CD8-positive, alpha-beta T cell (primary cell): ENCODE measurements at regions of chr19 and their contacts with region 1.

Region 1: GRCh38 chr19:12681074-12681951 is at the start of gene DHPS:
- DNase-seq: peak; percentile 81 to 99 (median 90)
- ATAC-seq: peak; percentile 74
- H3K4me3 ChIP-seq: peak within 1 kb of the TSS; percentile 83 to 96
- H3K4me3 Mint-ChIP-seq: peak within 1 kb of the TSS; percentile 96
- H3K27ac ChIP-seq: peak within 1 kb of the TSS; percentile 82 to 97
- H3K27ac Mint-ChIP-seq: peak within 1 kb of the TSS; percentile 92
- H3K4me1 ChIP-seq: peaks cover 19% of the 10 kb centered on the region
- H3K4me1 Mint-ChIP-seq: peaks cover 29% of the 10 kb centered on the region
- H3K27me3 ChIP-seq: no peaks in the 10 kb centered on the region
- H3K27me3 Mint-ChIP-seq: no peaks in the 10 kb centered on the region
- CTCF ChIP-seq: no peak
- total RNA-seq, gene DHPS: 98.7 to 100 TPM

Region 2: GRCh38 chr19:12453491-12453890 is 227.8 kb before region 1 on chr19:
- CTCF ChIA-PET with region 1: no interaction called
- POLR2A ChIA-PET with region 1: no interaction called
- intact Hi-C with region 1: no loop called
- DNase-seq: no peak
- ATAC-seq: no peak
- H3K4me3 ChIP-seq: no peak overlapping the region
- H3K4me3 Mint-ChIP-seq: no peak overlapping the region
- H3K27ac ChIP-seq: no peak overlapping the region
- H3K27ac Mint-ChIP-seq: no peak overlapping the region
- H3K4me1 ChIP-seq: no peaks in the 10 kb centered on the region
- H3K4me1 Mint-ChIP-seq: no peaks in the 10 kb centered on the region
- H3K27me3 ChIP-seq: no peaks in the 10 kb centered on the region
- H3K27me3 Mint-ChIP-seq: no peaks in the 10 kb centered on the region
- CTCF ChIP-seq: no peak

Region 3: DNA sequence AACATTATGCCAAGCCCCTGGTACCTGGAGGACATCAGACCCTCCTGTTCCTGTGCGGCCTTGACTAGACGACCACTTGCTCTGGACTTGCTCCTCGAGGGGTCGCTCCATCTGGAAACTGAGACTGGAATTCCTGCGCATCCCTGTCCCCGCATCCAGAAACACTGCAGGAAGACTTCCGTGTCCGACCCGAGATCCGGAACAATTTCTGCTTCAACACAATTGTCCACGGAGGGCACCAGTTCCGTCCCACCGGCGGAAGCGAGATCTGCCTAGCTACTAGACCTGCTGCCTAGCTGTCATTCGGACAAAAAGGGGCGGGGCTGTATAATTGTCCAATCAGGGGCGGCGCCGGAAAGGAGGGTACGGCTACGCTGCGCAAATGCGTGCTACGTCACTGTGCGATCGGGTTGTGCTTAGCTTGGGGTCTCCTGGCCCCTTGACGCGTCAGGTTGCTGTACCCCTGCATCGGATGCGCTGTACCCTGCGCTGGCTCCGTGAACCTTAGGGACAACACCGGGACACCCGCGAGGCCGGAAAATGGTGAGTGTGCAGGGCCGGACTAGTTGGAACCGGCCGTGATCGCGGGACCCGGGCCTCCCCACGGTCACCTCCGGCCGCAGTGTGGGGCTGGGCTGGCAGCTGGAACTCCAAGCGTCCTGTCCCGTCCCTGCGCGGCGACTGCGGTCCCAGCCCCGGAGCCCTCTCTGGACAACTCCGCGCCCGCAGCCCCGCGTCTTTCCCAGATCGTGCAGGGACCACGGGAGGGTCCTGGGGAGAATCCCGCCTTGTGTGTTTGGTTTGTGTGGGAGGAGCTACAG is 70.6 kb before region 1 on chr19 and contains the starts of genes ZNF490 and ZNF791:
- CTCF ChIA-PET with region 1: interaction called, 3 read pairs
- POLR2A ChIA-PET with region 1: interaction called, 3 read pairs
- intact Hi-C with region 1: loop called in 1 of 2 experiments (anchors 5 kb)
- DNase-seq: peak; percentile 93 to 98 (median 96)
- ATAC-seq: peak; percentile 86
- H3K4me3 ChIP-seq: peak within 1 kb of the TSS; percentile 83 to 85
- H3K4me3 Mint-ChIP-seq: peak within 1 kb of the TSS; percentile 100
- H3K27ac ChIP-seq: peak within 1 kb of the TSS; percentile 87 to 90
- H3K27ac Mint-ChIP-seq: peak within 1 kb of the TSS; percentile 100
- H3K4me1 ChIP-seq: peaks cover 44% of the 10 kb centered on the region
- H3K4me1 Mint-ChIP-seq: peaks cover 47% of the 10 kb centered on the region
- H3K27me3 ChIP-seq: no peaks in the 10 kb centered on the region
- H3K27me3 Mint-ChIP-seq: no peaks in the 10 kb centered on the region
- CTCF ChIP-seq: no peak
- total RNA-seq, gene ZNF490: 5.1 to 7.0 TPM
- total RNA-seq, gene ZNF791: 61.0 to 67.0 TPM

Region 4: GRCh38 chr19:12623361-12624022 is 57.8 kb before region 1 on chr19:
- CTCF ChIA-PET with region 1: no interaction called
- POLR2A ChIA-PET with region 1: no interaction called
- intact Hi-C with region 1: no loop called
- DNase-seq: no peak
- ATAC-seq: no peak
- H3K4me3 ChIP-seq: no peak overlapping the region
- H3K4me3 Mint-ChIP-seq: no peak overlapping the region
- H3K27ac ChIP-seq: no peak overlapping the region
- H3K27ac Mint-ChIP-seq: no peak overlapping the region
- H3K4me1 ChIP-seq: no peaks in the 10 kb centered on the region
- H3K4me1 Mint-ChIP-seq: peaks cover 21% of the 10 kb centered on the region
- H3K27me3 ChIP-seq: no peaks in the 10 kb centered on the region
- H3K27me3 Mint-ChIP-seq: no peaks in the 10 kb centered on the region
- CTCF ChIP-seq: no peak

Region 5: DNA sequence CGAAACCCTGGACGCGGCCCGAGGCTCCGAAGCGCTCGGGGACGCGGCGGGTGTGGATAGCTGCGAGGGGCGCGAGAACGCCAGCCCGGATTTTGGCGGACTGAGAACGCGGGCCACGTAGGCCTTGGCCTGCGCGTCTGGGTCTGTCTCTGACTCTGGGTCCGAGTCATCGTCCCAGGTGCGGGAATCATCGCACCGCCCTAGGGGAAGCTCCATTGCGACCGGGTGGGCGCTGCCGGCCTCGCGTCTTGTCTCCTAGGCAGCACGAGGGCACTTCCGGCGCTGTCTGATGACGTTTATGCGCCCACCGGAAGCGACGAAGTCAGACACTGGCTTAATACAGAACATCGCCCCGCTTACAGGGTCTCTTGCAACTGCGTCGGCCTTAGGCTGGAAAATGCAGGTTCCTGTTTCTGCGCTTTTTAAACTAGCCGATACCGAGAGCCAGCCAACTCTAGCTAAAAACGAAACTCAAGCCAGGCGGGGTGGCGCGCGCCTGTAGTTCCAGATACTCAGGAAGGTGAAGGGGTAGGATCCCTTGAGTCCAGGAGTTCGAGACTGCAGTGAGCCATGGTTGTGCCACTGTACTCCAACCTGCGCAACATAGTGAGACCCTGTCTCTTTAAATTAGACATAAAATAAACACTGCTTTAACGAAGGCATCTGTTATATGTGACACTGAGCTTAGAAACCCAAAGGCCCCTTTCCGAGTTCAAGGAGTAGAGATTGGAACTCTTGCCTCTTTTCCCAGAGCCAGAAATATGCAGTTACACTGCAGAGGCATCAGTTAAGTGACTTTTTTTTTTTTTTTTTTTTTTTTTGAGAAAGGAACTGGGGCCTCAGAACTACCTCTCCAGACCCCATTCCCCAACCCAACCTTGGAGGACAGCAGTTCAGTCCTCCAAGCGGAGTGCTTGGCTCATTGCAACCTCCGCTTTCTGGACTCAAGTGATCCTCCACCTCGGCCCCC is 15.3 kb after region 1 on chr19 and contains the start of gene FBXW9:
- CTCF ChIA-PET with region 1: interaction called, 13 read pairs
- POLR2A ChIA-PET with region 1: interaction called, 22 read pairs
- intact Hi-C with region 1: loop called (anchors 1 kb)
- DNase-seq: peak; percentile 95 to 99 (median 98)
- ATAC-seq: peak; percentile 92
- H3K4me3 ChIP-seq: peak within 1 kb of the TSS; percentile 88 to 89
- H3K4me3 Mint-ChIP-seq: peak within 1 kb of the TSS; percentile 90
- H3K27ac ChIP-seq: peak within 1 kb of the TSS; percentile 87 to 91
- H3K27ac Mint-ChIP-seq: peak within 1 kb of the TSS; percentile 97
- H3K4me1 ChIP-seq: peaks cover 14% of the 10 kb centered on the region
- H3K4me1 Mint-ChIP-seq: peaks cover 11% of the 10 kb centered on the region
- H3K27me3 ChIP-seq: no peaks in the 10 kb centered on the region
- H3K27me3 Mint-ChIP-seq: no peaks in the 10 kb centered on the region
- CTCF ChIP-seq: no peak
- total RNA-seq, gene FBXW9: 2.3 to 2.8 TPM

Region 6: GRCh38 chr19:12757544-12758274 is 76.4 kb after region 1 on chr19:
- CTCF ChIA-PET with region 1: interaction called, 12 read pairs
- POLR2A ChIA-PET with region 1: no interaction called
- intact Hi-C with region 1: loop called (anchors 1 kb)
- DNase-seq: peak; percentile 32 to 74 (median 49)
- ATAC-seq: peak; percentile 78
- H3K4me3 ChIP-seq: no peak overlapping the region
- H3K4me3 Mint-ChIP-seq: peak overlapping the region; percentile 18
- H3K27ac ChIP-seq: no peak overlapping the region
- H3K27ac Mint-ChIP-seq: no peak overlapping the region
- H3K4me1 ChIP-seq: peaks cover 7% of the 10 kb centered on the region
- H3K4me1 Mint-ChIP-seq: peaks cover 6% of the 10 kb centered on the region
- H3K27me3 ChIP-seq: peaks cover 3 to 4% of the 10 kb centered on the region in 2 experiments
- H3K27me3 Mint-ChIP-seq: peaks cover 16% of the 10 kb centered on the region
- CTCF ChIP-seq: peak; percentile 93

Region 7: GRCh38 chr19:12789904-12790619 is 108.7 kb after region 1 on chr19:
- CTCF ChIA-PET with region 1: no interaction called
- POLR2A ChIA-PET with region 1: no interaction called
- intact Hi-C with region 1: loop called in 1 of 2 experiments (anchors 5 kb)
- DNase-seq: peak; percentile 84 to 98 (median 91)
- ATAC-seq: peak; percentile 29
- H3K4me3 ChIP-seq: peak overlapping the region; percentile 86 to 100
- H3K4me3 Mint-ChIP-seq: peak overlapping the region; percentile 93
- H3K27ac ChIP-seq: peak overlapping the region; percentile 100
- H3K27ac Mint-ChIP-seq: peak overlapping the region; percentile 97
- H3K4me1 ChIP-seq: peaks cover 47% of the 10 kb centered on the region
- H3K4me1 Mint-ChIP-seq: peaks cover 37% of the 10 kb centered on the region
- H3K27me3 ChIP-seq: no peaks in the 10 kb centered on the region
- H3K27me3 Mint-ChIP-seq: no peaks in the 10 kb centered on the region
- CTCF ChIP-seq: no peak

Region 8: DNA sequence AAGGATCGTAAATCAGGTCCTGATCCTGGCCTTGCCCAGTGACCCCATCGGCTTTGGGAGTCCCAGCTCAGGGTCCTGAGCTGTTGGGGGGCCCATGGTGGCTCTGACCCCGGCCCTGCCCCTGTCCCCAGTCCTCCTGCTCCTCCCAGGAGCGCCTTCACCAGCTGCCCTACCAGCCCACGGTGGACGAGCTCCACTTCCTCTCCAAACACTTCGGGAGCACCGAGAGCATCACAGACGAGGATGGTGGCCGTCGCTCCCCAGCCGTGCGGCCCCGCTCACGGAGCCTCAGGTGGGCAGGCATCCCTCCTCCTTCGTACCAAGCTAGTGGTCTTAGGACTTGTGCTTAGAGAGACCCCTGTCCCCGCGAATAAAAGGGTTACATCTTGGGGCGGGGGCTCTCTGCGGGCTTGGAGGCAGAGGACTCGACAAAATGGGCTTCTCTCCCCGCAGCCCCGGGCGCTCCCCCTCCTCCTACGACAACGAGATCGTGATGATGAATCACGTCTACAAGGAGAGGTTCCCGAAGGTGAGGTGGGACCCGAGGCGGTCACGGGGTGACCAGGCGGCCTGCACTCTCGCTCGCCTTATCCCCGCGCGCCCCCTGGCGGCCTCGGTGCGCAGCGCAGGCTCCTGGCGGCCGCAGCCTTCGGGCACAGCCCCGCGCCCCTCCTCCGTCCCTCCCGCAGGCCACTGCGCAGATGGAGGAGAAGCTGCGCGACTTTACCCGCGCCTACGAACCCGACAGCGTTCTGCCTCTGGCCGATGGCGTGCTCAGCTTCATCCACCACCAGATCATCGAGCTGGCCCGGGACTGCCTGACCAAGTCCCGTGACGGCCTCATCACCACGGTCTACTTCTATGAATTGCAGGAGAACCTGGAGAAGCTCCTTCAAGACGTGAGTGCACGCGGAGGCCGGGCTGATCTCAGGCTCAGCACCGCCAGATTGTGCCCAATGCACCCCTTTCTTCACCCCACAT is 166.1 kb after region 1 on chr19:
- CTCF ChIA-PET with region 1: interaction called, 12 read pairs
- POLR2A ChIA-PET with region 1: no interaction called
- intact Hi-C with region 1: loop called in 1 of 2 experiments (anchors 1 kb)
- DNase-seq: peak; percentile 66 to 90 (median 83)
- ATAC-seq: peak; percentile 96
- H3K4me3 ChIP-seq: peak overlapping the region; percentile 20 to 25
- H3K4me3 Mint-ChIP-seq: peak overlapping the region; percentile 22
- H3K27ac ChIP-seq: no peak overlapping the region
- H3K27ac Mint-ChIP-seq: no peak overlapping the region
- H3K4me1 ChIP-seq: peaks cover 4% of the 10 kb centered on the region
- H3K4me1 Mint-ChIP-seq: peaks cover 3% of the 10 kb centered on the region
- H3K27me3 ChIP-seq: peaks cover 0 to 9% of the 10 kb centered on the region in 2 experiments
- H3K27me3 Mint-ChIP-seq: peaks cover 37% of the 10 kb centered on the region
- CTCF ChIP-seq: peak; percentile 99